Activated CD4-positive, alpha-beta memory T cell treated with anti-CD3 and anti-CD28 coated beads for 36 hours (primary cell): ENCODE measurements at regions of chr14 and their contacts with region 1.

Region 1: GRCh38 chr14:55094321-55095157 is 34.5 kb upstream of the LGALS3 start:
- DNase-seq: no peak
- H3K4me3 Mint-ChIP-seq: no peak overlapping the region
- H3K27ac Mint-ChIP-seq: no peak overlapping the region
- H3K4me1 Mint-ChIP-seq: peaks cover 25% of the 10 kb centered on the region
- H3K27me3 Mint-ChIP-seq: no peaks in the 10 kb centered on the region

Region 2: GRCh38 chr14:54845641-54846040 is 248.9 kb before region 1 on chr14:
- CTCF ChIA-PET with region 1: no interaction called
- POLR2A ChIA-PET with region 1: no interaction called
- intact Hi-C with region 1: no loop called
- DNase-seq: no peak
- H3K4me3 Mint-ChIP-seq: no peak overlapping the region
- H3K27ac Mint-ChIP-seq: no peak overlapping the region
- H3K4me1 Mint-ChIP-seq: no peaks in the 10 kb centered on the region
- H3K27me3 Mint-ChIP-seq: no peaks in the 10 kb centered on the region

Region 3: DNA sequence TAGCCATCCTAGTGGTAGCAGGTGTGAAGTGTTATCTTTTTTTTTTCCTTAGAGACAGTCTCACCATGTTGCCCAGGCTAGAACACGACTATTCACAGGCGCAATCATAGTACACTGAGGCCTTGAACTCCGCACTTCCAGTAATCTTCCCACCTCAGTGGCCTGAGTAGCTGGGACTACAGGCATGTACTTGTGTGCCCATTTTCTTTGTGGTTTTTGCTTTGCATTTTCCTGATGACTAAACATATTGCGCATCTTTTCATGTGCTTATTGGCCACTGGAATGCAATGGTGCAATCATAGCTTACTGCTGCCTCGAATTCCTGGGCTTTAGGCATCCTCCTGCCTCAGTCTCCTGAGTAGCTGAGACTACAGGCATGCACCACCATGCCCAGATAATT is 158.6 kb before region 1 on chr14:
- CTCF ChIA-PET with region 1: no interaction called
- POLR2A ChIA-PET with region 1: no interaction called
- intact Hi-C with region 1: no loop called
- DNase-seq: no peak
- H3K4me3 Mint-ChIP-seq: no peak overlapping the region
- H3K27ac Mint-ChIP-seq: no peak overlapping the region
- H3K4me1 Mint-ChIP-seq: no peaks in the 10 kb centered on the region
- H3K27me3 Mint-ChIP-seq: no peaks in the 10 kb centered on the region

Region 4: DNA sequence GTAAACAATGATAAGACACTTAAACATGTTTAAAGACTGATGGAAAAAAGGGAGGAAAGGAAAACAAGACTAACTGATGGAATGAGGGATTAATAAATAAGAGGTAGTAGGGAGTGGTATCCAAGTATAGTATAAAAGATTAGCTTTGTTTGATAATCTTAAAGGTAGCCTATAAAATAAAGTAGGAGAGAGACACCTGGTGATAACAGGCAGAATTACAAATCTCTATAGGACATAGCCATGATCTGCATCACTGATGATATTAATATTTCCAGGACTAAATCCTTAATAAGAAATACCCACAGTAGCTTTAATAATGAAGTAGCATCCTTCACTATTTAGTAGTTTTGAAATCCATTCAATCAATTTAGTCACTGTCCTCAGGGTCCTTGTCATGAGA is 66.5 kb after region 1 on chr14:
- CTCF ChIA-PET with region 1: interaction called, 81 read pairs
- POLR2A ChIA-PET with region 1: interaction called, 4 read pairs
- intact Hi-C with region 1: loop called (anchors 1 kb)
- DNase-seq: no peak
- H3K4me3 Mint-ChIP-seq: no peak overlapping the region
- H3K27ac Mint-ChIP-seq: no peak overlapping the region
- H3K4me1 Mint-ChIP-seq: peaks cover 11% of the 10 kb centered on the region
- H3K27me3 Mint-ChIP-seq: no peaks in the 10 kb centered on the region